Breast epithelium (tissue), 4 donors: ENCODE measurements at regions of chr2 and their contacts with region 1.

Region 1: DNA sequence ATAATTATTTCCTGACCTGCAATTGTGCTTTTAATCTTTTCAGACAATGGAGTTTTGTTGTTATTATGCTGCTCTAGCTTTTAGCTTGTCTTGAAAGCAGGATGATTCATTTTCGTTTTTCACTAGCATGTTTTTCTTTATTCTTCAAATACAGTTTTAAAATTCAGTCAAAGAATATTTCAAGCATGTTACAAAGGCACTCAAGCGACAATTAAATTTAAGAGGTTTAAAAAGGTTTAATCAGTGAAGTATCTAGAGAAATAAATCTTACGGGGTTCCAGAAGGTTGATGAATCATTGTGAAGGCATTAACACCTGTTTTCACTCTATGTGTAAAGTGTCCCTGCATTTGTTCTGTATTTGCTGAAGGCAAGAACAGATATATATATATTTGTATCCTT is 390.7 kb upstream of the TMEFF2 start:
- DNase-seq: no peak
- H3K4me3 ChIP-seq: no peak overlapping the region
- H3K27ac ChIP-seq: no peak overlapping the region
- H3K4me1 ChIP-seq: no peaks in the 10 kb centered on the region
- H3K27me3 ChIP-seq: no peaks in the 10 kb centered on the region
- CTCF ChIP-seq: no peak
- POLR2A ChIP-seq: no peak

Region 2: DNA sequence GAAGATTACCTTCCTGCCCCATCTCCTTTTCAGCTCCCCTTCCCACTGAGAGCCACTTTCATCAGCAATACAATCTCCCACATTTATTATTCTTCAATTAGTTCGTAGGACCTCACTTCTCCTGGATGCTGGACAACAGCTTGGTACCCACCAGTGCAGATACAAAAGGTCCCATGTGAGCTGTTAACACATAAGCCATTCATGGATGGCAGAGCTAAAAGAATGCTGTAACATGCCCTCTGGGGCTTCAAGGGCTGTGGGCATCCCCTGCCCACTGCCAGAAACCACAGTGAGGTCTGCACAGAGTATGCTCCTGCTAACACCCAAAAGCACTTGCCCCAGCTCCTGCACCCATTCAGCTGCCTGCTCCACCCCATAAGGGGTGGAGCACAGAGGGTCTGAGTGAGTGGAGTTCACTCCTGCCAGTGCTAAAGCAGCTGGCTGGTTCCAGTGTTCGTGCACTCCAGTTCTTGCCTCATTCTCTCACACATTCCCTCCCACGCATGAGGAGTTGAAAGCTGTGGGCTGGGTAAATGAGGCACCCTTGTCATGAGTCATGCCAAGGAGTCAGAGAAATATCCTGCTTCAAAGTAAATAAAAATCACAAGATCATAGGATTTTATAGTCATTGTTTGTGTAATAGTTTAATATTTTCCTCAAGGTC is 84.7 kb before region 1 on chr2:
- intact Hi-C with region 1: no loop called
- DNase-seq: no peak
- H3K4me3 ChIP-seq: no peak overlapping the region
- H3K27ac ChIP-seq: no peak overlapping the region
- H3K4me1 ChIP-seq: no peaks in the 10 kb centered on the region
- H3K27me3 ChIP-seq: no peaks in the 10 kb centered on the region
- CTCF ChIP-seq: no peak
- POLR2A ChIP-seq: no peak

Region 3: GRCh38 chr2:192978395-192978794 is 393.0 kb after region 1 on chr2:
- intact Hi-C with region 1: no loop called
- DNase-seq: no peak
- H3K4me3 ChIP-seq: no peak overlapping the region
- H3K27ac ChIP-seq: no peak overlapping the region
- H3K4me1 ChIP-seq: no peaks in the 10 kb centered on the region
- H3K27me3 ChIP-seq: no peaks in the 10 kb centered on the region
- CTCF ChIP-seq: no peak
- POLR2A ChIP-seq: no peak

Region 4: DNA sequence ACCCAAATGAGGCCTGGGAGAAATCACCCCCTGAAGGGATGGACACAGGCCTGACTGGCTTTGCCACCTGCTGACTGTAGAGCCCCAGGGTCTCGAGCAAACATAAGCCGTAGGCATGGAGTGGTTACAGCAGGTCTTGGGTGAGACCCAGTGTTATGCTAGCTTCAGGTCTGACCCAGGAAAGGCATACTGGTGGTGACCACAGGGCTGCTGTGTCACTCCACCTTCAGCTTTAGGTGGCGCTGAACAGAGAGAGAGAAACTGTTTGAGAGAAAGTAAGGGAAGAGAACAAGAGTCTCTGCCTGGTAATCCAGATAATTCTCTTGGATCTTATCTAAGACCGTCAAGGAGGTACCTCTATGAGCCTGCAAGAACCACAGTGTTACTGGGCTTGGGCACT is 1153.5 kb after region 1 on chr2:
- intact Hi-C with region 1: loop called (anchors 10 kb)
- DNase-seq: no peak
- H3K4me3 ChIP-seq: no peak overlapping the region
- H3K27ac ChIP-seq: no peak overlapping the region
- H3K4me1 ChIP-seq: no peaks in the 10 kb centered on the region
- H3K27me3 ChIP-seq: no peaks in the 10 kb centered on the region
- CTCF ChIP-seq: no peak
- POLR2A ChIP-seq: no peak